ENCODE measurements at regions of chr19 and their contacts with region 1.

Region 1: GRCh38 chr19:7562646-7563393 is 27.3 kb downstream of the PNPLA6 start:
- DNase-seq: peak in 1 of 9 donors; percentile 5
- ATAC-seq: no peak
- H3K4me3 ChIP-seq: no peak overlapping the region
- H3K4me3 Mint-ChIP-seq: no peak overlapping the region
- H3K27ac ChIP-seq: no peak overlapping the region
- H3K27ac Mint-ChIP-seq: no peak overlapping the region
- H3K4me1 ChIP-seq: no peaks in the 10 kb centered on the region
- H3K4me1 Mint-ChIP-seq: peaks cover 0 to 2% (median 0%) of the 10 kb centered on the region in 7 donors
- H3K27me3 ChIP-seq: no peaks in the 10 kb centered on the region
- H3K27me3 Mint-ChIP-seq: no peaks in the 10 kb centered on the region

Region 2: GRCh38 chr19:7177926-7178325 is 384.9 kb before region 1 on chr19:
- CTCF ChIA-PET with region 1: no interaction called
- POLR2A ChIA-PET with region 1: no interaction called
- intact Hi-C with region 1: no loop called
- DNase-seq: no peak
- ATAC-seq: no peak
- H3K4me3 ChIP-seq: no peak overlapping the region
- H3K4me3 Mint-ChIP-seq: no peak overlapping the region
- H3K27ac ChIP-seq: no peak overlapping the region
- H3K27ac Mint-ChIP-seq: no peak overlapping the region
- H3K4me1 ChIP-seq: peaks cover 4 to 8% of the 10 kb centered on the region in 2 donors
- H3K4me1 Mint-ChIP-seq: peaks cover 4 to 16% (median 11%) of the 10 kb centered on the region in 7 donors
- H3K27me3 ChIP-seq: no peaks in the 10 kb centered on the region
- H3K27me3 Mint-ChIP-seq: no peaks in the 10 kb centered on the region

Region 3: GRCh38 chr19:7636691-7637373 is 74.0 kb after region 1 on chr19 and contains the start of gene STXBP2:
- CTCF ChIA-PET with region 1: interaction called, 3 read pairs
- POLR2A ChIA-PET with region 1: interaction called, 4 read pairs
- intact Hi-C with region 1: loop called in 1 of 2 experiments (anchors 1 kb)
- DNase-seq: peak; percentile 87 to 95 (median 93)
- ATAC-seq: peak; percentile 98
- H3K4me3 ChIP-seq: peak within 1 kb of the TSS; percentile 81
- H3K4me3 Mint-ChIP-seq: peak within 1 kb of the TSS; percentile 75 to 89 (median 82)
- H3K27ac ChIP-seq: peak within 1 kb of the TSS; percentile 89
- H3K27ac Mint-ChIP-seq: peak within 1 kb of the TSS; percentile 80 to 92 (median 88)
- H3K4me1 ChIP-seq: peaks cover 10 to 20% of the 10 kb centered on the region in 2 donors
- H3K4me1 Mint-ChIP-seq: peaks cover 15 to 49% (median 31%) of the 10 kb centered on the region in 7 donors
- H3K27me3 ChIP-seq: no peaks in the 10 kb centered on the region
- H3K27me3 Mint-ChIP-seq: no peaks in the 10 kb centered on the region
- total RNA-seq, gene STXBP2: 158 to 411 (median 187) TPM

Region 4: DNA sequence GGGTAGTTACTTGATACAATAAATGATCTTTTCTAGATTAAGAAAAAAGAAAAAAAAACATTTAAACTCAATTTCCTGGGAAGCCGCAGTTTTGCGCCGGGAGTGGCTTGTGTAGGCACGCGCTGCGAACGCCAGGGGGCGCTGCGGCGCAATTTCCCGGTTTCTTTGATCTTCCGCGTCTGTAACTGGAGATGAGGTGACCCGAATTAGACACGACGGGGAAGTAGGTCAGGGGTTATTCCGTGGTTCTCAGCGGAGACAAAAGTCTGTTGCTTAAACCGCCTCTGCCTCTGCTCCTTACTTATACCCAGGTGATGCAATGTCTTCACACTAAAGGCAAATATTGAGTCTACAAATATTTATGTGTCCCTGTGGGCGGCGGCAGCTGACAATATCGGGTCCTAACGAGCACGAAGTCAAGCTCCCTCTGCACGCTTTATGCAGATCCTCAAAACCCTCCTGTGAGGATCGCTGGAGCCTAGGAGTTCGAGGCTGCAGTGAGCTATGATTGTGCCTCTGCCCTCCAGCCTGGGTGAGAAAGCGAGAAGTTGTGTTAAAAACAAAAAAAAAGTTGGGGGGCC is 89.3 kb after region 1 on chr19:
- CTCF ChIA-PET with region 1: no interaction called
- POLR2A ChIA-PET with region 1: no interaction called
- intact Hi-C with region 1: loop called in 1 of 2 experiments (anchors 1 kb)
- DNase-seq: peak; percentile 77 to 91 (median 85)
- ATAC-seq: peak; percentile 91
- H3K4me3 ChIP-seq: peak overlapping the region; percentile 49
- H3K4me3 Mint-ChIP-seq: peak overlapping the region; percentile 60 to 86 (median 81)
- H3K27ac ChIP-seq: peak overlapping the region; percentile 37
- H3K27ac Mint-ChIP-seq: peak overlapping the region in 6 of 9 donors; percentile 55 to 85 (median 75)
- H3K4me1 ChIP-seq: peaks cover 0 to 7% of the 10 kb centered on the region in 2 donors
- H3K4me1 Mint-ChIP-seq: peaks cover 5 to 15% (median 11%) of the 10 kb centered on the region in 7 donors
- H3K27me3 ChIP-seq: no peaks in the 10 kb centered on the region
- H3K27me3 Mint-ChIP-seq: peaks cover 0 to 6% (median 0%) of the 10 kb centered on the region in 5 donors

Region 5: GRCh38 chr19:8005534-8006256 is 442.9 kb after region 1 on chr19 and contains the start of gene ELAVL1:
- CTCF ChIA-PET with region 1: no interaction called
- POLR2A ChIA-PET with region 1: no interaction called
- intact Hi-C with region 1: no loop called
- DNase-seq: peak; percentile 80 to 96 (median 88)
- ATAC-seq: peak; percentile 96
- H3K4me3 ChIP-seq: peak within 1 kb of the TSS; percentile 86
- H3K4me3 Mint-ChIP-seq: peak within 1 kb of the TSS; percentile 88 to 97 (median 92)
- H3K27ac ChIP-seq: peak within 1 kb of the TSS; percentile 93
- H3K27ac Mint-ChIP-seq: peak within 1 kb of the TSS; percentile 78 to 94 (median 90)
- H3K4me1 ChIP-seq: peaks cover 20 to 25% of the 10 kb centered on the region in 2 donors
- H3K4me1 Mint-ChIP-seq: peaks cover 30 to 43% (median 37%) of the 10 kb centered on the region in 7 donors
- H3K27me3 ChIP-seq: no peaks in the 10 kb centered on the region
- H3K27me3 Mint-ChIP-seq: no peaks in the 10 kb centered on the region
- total RNA-seq, gene ELAVL1: 32.4 to 117 (median 49.6) TPM